CD8-positive, alpha-beta T cell (primary cell): ENCODE measurements at regions of chr5 and their contacts with region 1.

Region 1: GRCh38 chr5:134077926-134078580 is 36.4 kb upstream of the TCF7 start:
- DNase-seq: peak in 3 of 9 experiments; percentile 41 to 52 (median 48)
- ATAC-seq: peak; percentile 27
- H3K4me3 ChIP-seq: no peak overlapping the region
- H3K4me3 Mint-ChIP-seq: peak overlapping the region; percentile 44
- H3K27ac ChIP-seq: no peak overlapping the region
- H3K27ac Mint-ChIP-seq: peak overlapping the region; percentile 97
- H3K4me1 ChIP-seq: peaks cover 76% of the 10 kb centered on the region
- H3K4me1 Mint-ChIP-seq: peaks cover 73% of the 10 kb centered on the region
- H3K27me3 ChIP-seq: no peaks in the 10 kb centered on the region
- H3K27me3 Mint-ChIP-seq: no peaks in the 10 kb centered on the region
- CTCF ChIP-seq: no peak

Region 2: GRCh38 chr5:132886064-132886823 is 1191.8 kb before region 1 on chr5:
- CTCF ChIA-PET with region 1: no interaction called
- POLR2A ChIA-PET with region 1: no interaction called
- intact Hi-C with region 1: no loop called
- DNase-seq: no peak
- ATAC-seq: no peak
- H3K4me3 ChIP-seq: no peak overlapping the region
- H3K4me3 Mint-ChIP-seq: no peak overlapping the region
- H3K27ac ChIP-seq: no peak overlapping the region
- H3K27ac Mint-ChIP-seq: no peak overlapping the region
- H3K4me1 ChIP-seq: no peaks in the 10 kb centered on the region
- H3K4me1 Mint-ChIP-seq: peaks cover 3% of the 10 kb centered on the region
- H3K27me3 ChIP-seq: no peaks in the 10 kb centered on the region
- H3K27me3 Mint-ChIP-seq: no peaks in the 10 kb centered on the region
- CTCF ChIP-seq: no peak

Region 3: GRCh38 chr5:133814152-133814551 is 263.9 kb before region 1 on chr5:
- CTCF ChIA-PET with region 1: no interaction called
- POLR2A ChIA-PET with region 1: no interaction called
- intact Hi-C with region 1: no loop called
- DNase-seq: no peak
- ATAC-seq: no peak
- H3K4me3 ChIP-seq: no peak overlapping the region
- H3K4me3 Mint-ChIP-seq: no peak overlapping the region
- H3K27ac ChIP-seq: no peak overlapping the region
- H3K27ac Mint-ChIP-seq: no peak overlapping the region
- H3K4me1 ChIP-seq: no peaks in the 10 kb centered on the region
- H3K4me1 Mint-ChIP-seq: no peaks in the 10 kb centered on the region
- H3K27me3 ChIP-seq: no peaks in the 10 kb centered on the region
- H3K27me3 Mint-ChIP-seq: peaks cover 29% of the 10 kb centered on the region
- CTCF ChIP-seq: no peak

Region 4: GRCh38 chr5:134092878-134093277 is 14.8 kb after region 1 on chr5:
- CTCF ChIA-PET with region 1: interaction called, 18 read pairs
- POLR2A ChIA-PET with region 1: interaction called, 5 read pairs
- intact Hi-C with region 1: loop called in 1 of 2 experiments (anchors 1 kb)
- DNase-seq: peak in 1 of 9 experiments; percentile 25
- ATAC-seq: no peak
- H3K4me3 ChIP-seq: no peak overlapping the region
- H3K4me3 Mint-ChIP-seq: peak overlapping the region; percentile 40
- H3K27ac ChIP-seq: no peak overlapping the region
- H3K27ac Mint-ChIP-seq: peak overlapping the region; percentile 90
- H3K4me1 ChIP-seq: peaks cover 96% of the 10 kb centered on the region
- H3K4me1 Mint-ChIP-seq: peaks cover 88% of the 10 kb centered on the region
- H3K27me3 ChIP-seq: no peaks in the 10 kb centered on the region
- H3K27me3 Mint-ChIP-seq: no peaks in the 10 kb centered on the region
- CTCF ChIP-seq: no peak

Region 5: DNA sequence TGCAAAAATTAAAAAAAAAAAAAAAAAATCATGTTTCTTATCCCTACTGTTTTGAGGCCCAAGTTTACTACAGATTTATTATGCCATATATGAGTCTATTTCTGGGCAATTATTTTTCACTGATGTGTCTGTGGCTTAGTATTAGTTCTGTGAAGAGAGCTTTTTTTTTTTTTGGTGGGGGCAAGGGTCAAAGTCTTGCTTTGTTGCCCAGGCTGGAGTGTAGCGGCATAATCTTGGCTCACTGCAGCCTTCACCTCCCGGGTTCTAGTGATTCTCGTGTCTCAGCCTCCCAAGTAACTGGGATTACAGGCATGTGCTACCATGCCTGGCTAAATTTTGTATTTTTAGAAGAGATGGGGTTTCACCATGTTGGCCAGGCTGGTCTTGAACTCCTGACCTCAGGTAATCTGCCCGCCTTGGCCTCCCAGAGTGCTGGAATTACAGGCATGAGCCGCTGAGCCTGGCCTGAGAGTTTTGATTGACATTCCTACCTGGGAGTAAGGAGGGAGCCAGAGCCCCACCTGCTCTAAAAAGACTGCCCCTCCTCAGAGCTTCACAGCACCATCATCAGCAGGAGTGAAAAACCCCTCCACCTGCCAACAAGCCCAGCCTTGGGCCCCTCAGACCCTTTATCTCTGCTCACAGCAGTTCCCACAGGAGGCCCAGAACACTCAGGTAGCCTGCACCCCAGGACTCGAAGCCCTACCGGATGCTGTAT is 411.3 kb after region 1 on chr5:
- CTCF ChIA-PET with region 1: no interaction called
- POLR2A ChIA-PET with region 1: no interaction called
- intact Hi-C with region 1: no loop called
- DNase-seq: no peak
- ATAC-seq: no peak
- H3K4me3 ChIP-seq: no peak overlapping the region
- H3K4me3 Mint-ChIP-seq: no peak overlapping the region
- H3K27ac ChIP-seq: no peak overlapping the region
- H3K27ac Mint-ChIP-seq: no peak overlapping the region
- H3K4me1 ChIP-seq: no peaks in the 10 kb centered on the region
- H3K4me1 Mint-ChIP-seq: no peaks in the 10 kb centered on the region
- H3K27me3 ChIP-seq: no peaks in the 10 kb centered on the region
- H3K27me3 Mint-ChIP-seq: no peaks in the 10 kb centered on the region
- CTCF ChIP-seq: no peak